ENCODE measurements at regions of chr18 and their contacts with region 1.

Region 1: GRCh38 chr18:76803814-76804213 is 18.5 kb upstream of the ZNF236 start:
- DNase-seq: peak; percentile 52
- H3K4me3 Mint-ChIP-seq: no peak overlapping the region
- H3K27ac Mint-ChIP-seq: no peak overlapping the region
- H3K4me1 Mint-ChIP-seq: peaks cover 8% of the 10 kb centered on the region
- H3K27me3 Mint-ChIP-seq: peaks cover 8% of the 10 kb centered on the region

Region 2: DNA sequence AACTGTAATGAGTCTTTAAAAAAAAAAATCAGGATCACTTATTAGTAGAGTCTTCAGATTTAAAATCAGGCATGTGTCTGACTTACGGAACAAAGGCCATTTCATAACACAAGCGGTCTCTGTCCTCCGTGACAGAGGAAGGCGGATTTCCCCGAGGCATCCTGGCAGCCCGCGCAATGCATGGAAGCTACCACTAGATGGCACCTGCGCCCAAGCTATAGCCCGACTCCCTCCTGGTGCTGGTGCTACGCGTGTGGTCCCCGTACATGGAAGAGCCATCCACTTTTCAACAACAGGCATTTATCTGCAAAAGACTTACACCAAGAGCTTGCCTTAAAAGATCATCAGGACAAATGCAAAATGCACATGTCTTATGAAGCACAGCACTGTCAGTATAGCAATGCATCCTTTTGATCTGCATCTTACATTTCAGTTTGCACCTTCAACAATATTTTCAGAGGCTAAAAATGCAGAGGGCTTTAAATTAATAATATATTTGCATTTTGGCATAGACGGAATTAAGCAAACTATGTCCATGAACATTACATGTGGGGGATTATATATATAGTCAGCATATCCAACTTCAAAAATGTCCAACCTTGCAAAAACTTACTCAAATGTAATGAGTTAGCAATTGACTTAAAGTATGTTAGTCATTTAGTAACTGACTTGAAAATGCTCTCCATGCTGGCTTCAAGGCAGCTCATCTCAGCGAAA is 404.8 kb before region 1 on chr18:
- intact Hi-C with region 1: loop called (anchors 2 kb)
- DNase-seq: peak; percentile 61
- H3K4me3 Mint-ChIP-seq: no peak overlapping the region
- H3K27ac Mint-ChIP-seq: no peak overlapping the region
- H3K4me1 Mint-ChIP-seq: peaks cover 6% of the 10 kb centered on the region
- H3K27me3 Mint-ChIP-seq: peaks cover 18% of the 10 kb centered on the region

Region 3: DNA sequence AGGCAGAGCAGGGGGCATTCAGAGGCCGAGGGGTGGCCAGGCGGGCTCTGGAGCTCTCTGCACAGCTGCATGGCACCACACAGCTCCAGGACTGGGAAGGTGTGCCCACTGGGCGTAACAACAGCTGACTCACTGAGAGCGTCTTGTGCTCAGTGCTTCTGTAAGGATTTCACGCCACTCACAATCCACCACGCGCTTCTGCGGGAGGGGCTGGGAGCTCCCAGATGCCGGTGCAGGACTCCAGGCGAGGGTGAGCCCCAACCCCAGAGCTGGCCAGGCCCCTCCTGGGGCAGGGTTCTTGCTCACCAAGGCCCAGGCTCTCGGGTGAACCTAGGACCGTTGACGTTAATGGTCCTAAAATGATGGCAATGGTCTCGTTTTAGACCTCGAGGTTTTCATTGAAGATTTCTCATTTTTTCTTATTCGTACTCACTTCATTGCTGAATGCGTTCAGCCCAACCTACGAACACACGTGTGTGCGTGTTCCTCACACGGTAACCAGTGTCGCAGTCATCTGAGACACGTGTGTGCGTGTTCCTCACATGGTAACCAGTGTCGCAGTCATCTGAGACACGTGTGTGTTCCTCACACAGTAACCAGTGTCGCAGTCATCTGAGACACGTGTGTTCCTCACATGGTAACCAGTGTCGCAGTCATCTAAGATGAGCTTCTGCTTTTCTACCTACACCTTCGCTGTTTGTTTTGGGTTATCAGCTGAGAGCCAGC is 19.9 kb before region 1 on chr18:
- intact Hi-C with region 1: no loop called
- DNase-seq: no peak
- H3K4me3 Mint-ChIP-seq: no peak overlapping the region
- H3K27ac Mint-ChIP-seq: no peak overlapping the region
- H3K4me1 Mint-ChIP-seq: peaks cover 9% of the 10 kb centered on the region
- H3K27me3 Mint-ChIP-seq: peaks cover 24% of the 10 kb centered on the region

Region 4: GRCh38 chr18:76859474-76860339 is 55.9 kb after region 1 on chr18:
- intact Hi-C with region 1: loop called (anchors 1 kb)
- DNase-seq: peak; percentile 35
- H3K4me3 Mint-ChIP-seq: peak overlapping the region; percentile 51
- H3K27ac Mint-ChIP-seq: peak overlapping the region; percentile 89
- H3K4me1 Mint-ChIP-seq: peaks cover 27% of the 10 kb centered on the region
- H3K27me3 Mint-ChIP-seq: no peaks in the 10 kb centered on the region

Region 5: GRCh38 chr18:76982841-76983587 is 179.2 kb after region 1 on chr18:
- intact Hi-C with region 1: loop called (anchors 1 kb)
- DNase-seq: peak; percentile 77
- H3K4me3 Mint-ChIP-seq: no peak overlapping the region
- H3K27ac Mint-ChIP-seq: no peak overlapping the region
- H3K4me1 Mint-ChIP-seq: peaks cover 10% of the 10 kb centered on the region
- H3K27me3 Mint-ChIP-seq: peaks cover 2% of the 10 kb centered on the region

Region 6: DNA sequence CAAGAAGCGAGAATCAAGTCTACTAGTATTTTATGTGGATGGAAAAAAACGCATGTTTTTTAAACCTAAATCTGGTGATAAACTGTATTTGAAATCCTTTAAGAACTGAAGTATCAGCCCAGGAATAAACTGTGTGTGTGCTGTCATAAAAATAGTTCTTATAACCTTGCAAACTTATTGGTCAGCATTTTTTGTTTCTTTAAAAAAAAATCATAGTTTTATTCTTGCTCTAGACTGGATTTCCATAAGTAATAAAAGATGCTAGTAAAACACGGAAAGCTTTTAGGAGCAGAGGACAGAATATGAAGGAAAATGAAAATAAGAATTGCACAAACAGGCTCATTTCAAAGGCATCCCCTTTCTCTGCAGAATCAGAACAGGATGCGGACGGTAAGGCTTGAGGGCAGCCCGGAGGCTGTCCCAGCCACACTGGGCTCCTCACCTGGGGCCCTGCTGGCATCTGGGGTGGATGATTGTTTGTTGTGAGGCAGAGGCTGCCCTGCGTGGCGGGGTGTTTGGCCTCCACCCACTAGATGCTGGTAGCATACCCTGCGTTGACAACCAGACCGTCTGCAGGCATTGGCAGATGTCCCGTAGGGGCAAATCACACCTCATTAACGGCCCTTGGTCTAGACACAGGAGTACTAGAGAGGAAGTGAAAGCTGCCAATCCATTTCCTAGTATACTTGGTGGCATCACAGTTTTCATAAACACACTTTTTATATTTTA is 276.3 kb after region 1 on chr18:
- intact Hi-C with region 1: no loop called
- DNase-seq: no peak
- H3K4me3 Mint-ChIP-seq: no peak overlapping the region
- H3K27ac Mint-ChIP-seq: no peak overlapping the region
- H3K4me1 Mint-ChIP-seq: peaks cover 66% of the 10 kb centered on the region
- H3K27me3 Mint-ChIP-seq: no peaks in the 10 kb centered on the region

Region 7: DNA sequence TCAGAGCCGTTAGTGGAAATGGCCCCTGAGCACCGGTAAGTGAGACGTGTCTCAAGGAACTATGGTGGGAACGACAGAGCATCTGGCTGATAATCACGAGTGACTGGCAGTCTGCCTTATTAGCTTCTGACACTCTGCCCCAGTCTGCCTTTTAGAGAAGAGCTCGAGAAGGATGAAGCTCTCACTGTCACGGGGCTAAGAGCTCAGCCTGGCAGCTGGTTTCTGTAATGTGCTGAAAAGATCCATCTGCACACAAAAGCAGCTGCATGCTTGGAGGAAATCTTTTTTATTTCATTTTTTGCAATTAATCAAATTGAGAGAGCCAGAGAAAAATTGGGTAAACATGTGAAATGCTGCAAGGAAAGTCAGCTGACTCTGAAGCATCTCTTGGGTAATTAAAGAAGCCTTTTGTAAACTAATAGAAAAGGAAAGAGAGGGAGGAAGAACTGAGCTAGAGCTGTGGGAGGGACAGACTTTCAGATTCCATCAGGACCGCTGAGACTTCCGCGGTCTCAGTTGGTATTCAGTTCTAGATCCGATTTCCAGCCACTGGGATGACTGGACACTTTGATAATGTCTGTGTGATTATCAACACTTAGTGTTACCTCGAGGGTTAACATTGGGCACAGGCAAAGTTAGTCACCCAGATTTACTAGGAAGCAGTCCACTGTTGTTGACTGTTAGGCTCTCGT is 304.3 kb after region 1 on chr18:
- intact Hi-C with region 1: no loop called
- DNase-seq: no peak
- H3K4me3 Mint-ChIP-seq: peak overlapping the region; percentile 51
- H3K27ac Mint-ChIP-seq: peak overlapping the region; percentile 19
- H3K4me1 Mint-ChIP-seq: peaks cover 78% of the 10 kb centered on the region
- H3K27me3 Mint-ChIP-seq: no peaks in the 10 kb centered on the region

Region 8: DNA sequence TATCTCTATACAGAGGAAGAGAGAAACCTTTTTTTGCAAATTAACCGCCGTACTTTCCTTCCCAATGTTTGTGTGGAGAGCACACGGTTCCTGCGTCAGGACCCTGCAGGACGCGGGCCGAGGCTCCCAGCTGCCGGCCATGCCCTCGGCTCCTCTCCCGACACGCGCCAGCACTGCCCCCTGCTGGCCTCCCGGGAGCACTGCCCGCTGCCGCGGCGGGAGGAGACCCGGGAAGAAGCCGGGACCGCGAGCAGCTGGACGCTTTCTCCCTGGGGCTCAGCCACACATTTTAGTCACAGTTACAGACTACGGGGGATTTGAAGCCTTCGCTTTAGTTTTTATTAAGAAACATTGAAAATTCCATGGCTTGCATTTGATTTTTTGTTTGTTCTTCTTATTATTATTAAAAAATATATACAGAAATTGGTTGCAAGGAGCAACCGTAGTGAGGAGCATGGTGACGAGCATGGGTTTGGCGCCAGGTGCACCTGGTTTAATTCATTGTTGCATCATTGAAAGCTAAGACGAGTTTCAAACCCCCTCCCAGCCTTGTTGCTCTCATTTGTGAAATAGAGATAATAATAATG is 847.1 kb after region 1 on chr18:
- intact Hi-C with region 1: loop called (anchors 2 kb)
- DNase-seq: peak; percentile 41
- H3K4me3 Mint-ChIP-seq: no peak overlapping the region
- H3K27ac Mint-ChIP-seq: no peak overlapping the region
- H3K4me1 Mint-ChIP-seq: peaks cover 4% of the 10 kb centered on the region
- H3K27me3 Mint-ChIP-seq: peaks cover 9% of the 10 kb centered on the region

Measured in activated T-helper 1 cell treated with anti-CD3 and anti-CD28 coated beads, Interleukin-12 subunit alpha, Interleukin-12 subunit beta, Interleukin-2, Interleukin-4 antibody, amounts not matched to agents 30 ng/mL and 10 ng/mL and 1 ng/mL, durations not matched to agents 14 hours and 24 hours and 36 hours (primary cell).